Sciatic nerve (tissue), 2 donors: ENCODE measurements at regions of chr17 and their contacts with region 1.

Region 1: DNA sequence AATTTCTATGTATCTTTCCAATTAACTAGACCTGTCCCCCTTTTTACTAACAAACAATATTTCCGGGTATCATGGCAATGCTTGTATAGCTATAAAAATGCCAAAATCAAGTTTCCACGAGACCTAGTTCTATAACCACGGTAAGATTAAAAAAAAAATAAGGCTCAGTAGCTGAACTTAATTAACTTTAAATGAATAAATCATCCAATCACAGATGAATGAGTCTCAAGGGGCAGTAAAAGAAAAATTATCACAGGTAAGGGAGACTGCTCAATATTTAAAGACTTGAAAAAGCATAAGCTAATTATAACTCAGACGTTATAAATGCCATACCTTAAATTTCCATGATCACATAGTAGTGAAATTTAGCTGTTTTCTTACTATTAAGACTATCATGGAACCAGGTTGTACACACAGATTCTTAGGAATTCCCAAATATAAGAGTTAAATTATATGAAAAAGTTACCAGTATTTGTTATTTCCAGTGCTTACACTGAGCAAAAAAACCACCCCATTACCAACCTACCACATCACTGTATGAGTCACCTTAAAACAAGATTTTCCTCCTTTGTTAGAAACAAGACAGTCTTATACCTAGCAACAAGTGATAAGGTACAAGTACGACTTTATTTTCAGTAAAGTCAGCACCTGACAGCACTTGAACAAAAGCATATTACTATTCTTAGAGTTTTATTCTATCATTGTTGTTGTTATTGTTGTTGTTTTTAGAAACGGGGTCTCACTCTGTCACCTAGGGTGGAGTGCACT is 20.6 kb downstream of the SSH2 start:
- DNase-seq: no peak
- ATAC-seq: no peak

Region 2: GRCh38 chr17:29210879-29211278 is 698.5 kb before region 1 on chr17:
- intact Hi-C with region 1: no loop called
- DNase-seq: no peak
- ATAC-seq: no peak

Region 3: GRCh38 chr17:31122746-31123145 is 1213.3 kb after region 1 on chr17:
- intact Hi-C with region 1: loop called (anchors 5 kb)
- DNase-seq: no peak
- ATAC-seq: no peak